PC-9 (cell line): ENCODE measurements at regions of chr6 and their contacts with region 1.

Region 1: DNA sequence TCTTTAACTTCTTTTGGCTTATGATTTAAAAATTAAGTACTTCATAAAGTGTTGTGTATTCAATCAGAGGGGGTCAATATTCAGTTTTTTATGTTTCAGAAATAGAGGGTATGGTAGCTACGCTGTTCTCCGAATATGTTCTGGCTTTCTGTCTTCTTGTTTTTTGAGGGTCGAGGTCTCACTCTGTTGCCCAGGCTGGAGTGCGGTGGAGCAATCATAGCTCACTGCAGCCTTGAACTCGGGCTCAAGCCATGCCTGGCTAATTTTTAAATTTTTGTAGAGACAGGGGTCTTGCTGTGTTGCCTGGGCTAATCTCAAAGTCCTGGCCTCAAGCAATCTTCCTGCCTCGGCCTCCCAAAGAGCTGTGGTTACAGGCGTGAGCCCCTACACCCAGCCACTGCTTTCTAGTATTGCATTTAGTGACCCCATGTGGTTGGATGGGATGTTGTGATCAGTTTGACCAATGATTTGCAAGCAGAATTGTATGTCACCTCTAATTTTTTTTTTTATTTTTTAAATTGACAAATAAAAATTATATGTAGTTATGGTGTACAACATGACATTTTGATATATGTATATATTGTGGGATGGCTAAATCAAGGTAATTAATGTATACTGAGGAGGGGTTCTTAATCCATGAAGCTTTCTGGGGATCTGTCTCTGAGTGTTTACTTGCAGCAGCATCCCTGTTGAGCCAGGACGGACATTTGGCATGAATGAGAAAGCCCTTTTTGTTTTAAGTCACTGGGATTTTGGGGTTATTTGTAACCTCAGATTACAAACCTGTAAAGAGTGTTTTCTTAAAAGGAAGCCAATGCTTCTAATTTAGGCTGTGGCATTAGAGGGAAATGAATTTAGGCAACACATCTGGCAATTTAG is 38.5 kb upstream of the DEK start:
- DNase-seq: no peak
- H3K4me3 ChIP-seq: no peak overlapping the region
- H3K27ac ChIP-seq: no peak overlapping the region
- H3K4me1 ChIP-seq: no peaks in the 10 kb centered on the region; the same call in 1 of the 2 replicates
- H3K27me3 ChIP-seq: no peaks in the 10 kb centered on the region
- CTCF ChIP-seq: no peak; the same call in 1 of the 2 replicates

Region 2: GRCh38 chr6:17871836-17872235 is 431.0 kb before region 1 on chr6:
- CTCF ChIA-PET with region 1: no interaction called
- POLR2A ChIA-PET with region 1: interaction called, 20 read pairs
- intact Hi-C with region 1: no loop called
- DNase-seq: no peak
- H3K4me3 ChIP-seq: no peak overlapping the region
- H3K27ac ChIP-seq: no peak overlapping the region
- H3K4me1 ChIP-seq: peaks cover 43% of the 10 kb centered on the region
- H3K27me3 ChIP-seq: no peaks in the 10 kb centered on the region
- CTCF ChIP-seq: no peak

Region 3: GRCh38 chr6:18371010-18371409 is 68.2 kb after region 1 on chr6:
- CTCF ChIA-PET with region 1: no interaction called
- POLR2A ChIA-PET with region 1: interaction called, 11 read pairs
- intact Hi-C with region 1: no loop called
- DNase-seq: no peak
- H3K4me3 ChIP-seq: no peak overlapping the region
- H3K27ac ChIP-seq: no peak overlapping the region
- H3K4me1 ChIP-seq: peaks cover 4% of the 10 kb centered on the region; the same call in 1 of the 2 replicates
- H3K27me3 ChIP-seq: no peaks in the 10 kb centered on the region
- CTCF ChIP-seq: no peak

Region 4: GRCh38 chr6:18515767-18516166 is 213.0 kb after region 1 on chr6:
- CTCF ChIA-PET with region 1: no interaction called
- POLR2A ChIA-PET with region 1: no interaction called
- intact Hi-C with region 1: no loop called
- DNase-seq: no peak
- H3K4me3 ChIP-seq: no peak overlapping the region
- H3K27ac ChIP-seq: no peak overlapping the region
- H3K4me1 ChIP-seq: no peaks in the 10 kb centered on the region
- H3K27me3 ChIP-seq: no peaks in the 10 kb centered on the region
- CTCF ChIP-seq: no peak